Mammary epithelial cell (primary cell): ENCODE measurements at regions of chr6 and their contacts with region 1.

Region 1: GRCh38 chr6:18595774-18596530 is 208.8 kb downstream of the RNF144B start:
- DNase-seq: peak; percentile 36
- H3K4me3 ChIP-seq: no peak overlapping the region
- H3K27ac ChIP-seq: no peak overlapping the region
- H3K4me1 ChIP-seq: no peaks in the 10 kb centered on the region
- H3K27me3 ChIP-seq: no peaks in the 10 kb centered on the region
- CTCF ChIP-seq: peak; percentile 94 to 97

Region 2: DNA sequence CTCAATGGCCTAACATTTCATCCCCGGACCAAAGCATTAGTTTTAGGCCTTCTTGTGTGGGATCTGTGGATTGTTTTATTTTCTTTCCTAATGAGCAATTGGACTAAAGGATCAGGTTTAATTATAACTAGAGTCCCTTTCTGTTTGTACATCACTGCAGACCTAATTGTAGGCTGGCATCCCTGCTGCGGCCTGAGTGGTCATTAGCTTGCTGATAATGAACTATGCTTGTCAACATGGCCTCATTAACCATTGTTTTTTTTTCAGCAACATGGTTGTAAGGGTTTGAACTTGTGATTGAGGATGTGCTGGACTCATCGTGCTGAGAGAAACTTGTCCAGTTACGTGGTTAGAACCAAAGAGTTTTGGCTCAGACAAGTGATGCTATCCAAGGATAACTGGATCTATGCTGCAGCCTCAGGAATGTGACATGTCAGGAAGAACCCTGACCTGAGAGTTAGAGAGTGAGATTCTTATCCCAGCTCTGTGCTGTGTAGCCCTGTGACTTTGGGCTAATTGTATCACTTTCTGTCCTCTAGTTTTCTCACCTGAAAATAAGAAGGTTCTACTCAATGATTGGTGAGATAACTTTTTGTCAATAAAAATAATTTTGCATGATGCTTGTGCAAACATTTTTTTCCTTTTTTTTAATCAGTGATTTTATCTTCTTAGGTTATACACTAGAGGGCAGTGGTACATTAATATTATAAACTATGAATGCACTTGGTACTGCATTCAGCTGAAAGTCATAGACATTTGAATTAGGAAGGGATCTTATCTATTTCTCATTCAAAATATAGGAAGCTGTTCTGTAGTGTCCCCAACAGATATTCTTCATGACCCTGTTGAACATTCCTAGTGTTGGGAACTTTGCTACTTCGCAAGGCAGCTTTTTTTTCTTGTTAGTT is 67.9 kb before region 1 on chr6:
- CTCF ChIA-PET with region 1: no interaction called
- dilution Hi-C with region 1: no loop called
- in situ Hi-C with region 1: no loop called
- intact Hi-C with region 1: loop called (anchors 2 kb)
- DNase-seq: no peak
- H3K4me3 ChIP-seq: no peak overlapping the region
- H3K27ac ChIP-seq: no peak overlapping the region
- H3K4me1 ChIP-seq: no peaks in the 10 kb centered on the region
- H3K27me3 ChIP-seq: peaks cover 2% of the 10 kb centered on the region
- CTCF ChIP-seq: peak; percentile 30 to 46

Region 3: DNA sequence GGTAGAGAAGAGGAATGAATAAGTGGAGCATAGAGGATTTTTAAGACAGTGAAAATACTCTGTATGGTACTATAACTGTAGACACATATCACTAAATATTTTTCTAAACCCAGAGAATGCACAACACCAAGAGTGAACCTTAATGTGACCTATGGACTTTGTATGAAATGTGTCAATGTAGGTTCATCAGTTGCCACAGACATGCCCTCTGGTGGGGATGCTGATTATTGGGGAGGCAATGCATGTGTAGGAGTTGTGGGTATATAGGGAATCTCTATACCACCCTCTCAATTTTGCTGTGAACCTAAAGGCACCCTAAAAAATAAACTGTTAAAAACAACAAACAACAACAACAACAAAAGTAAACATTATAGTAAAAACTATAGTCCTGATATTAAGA is 84.9 kb after region 1 on chr6:
- CTCF ChIA-PET with region 1: no interaction called
- dilution Hi-C with region 1: no loop called
- in situ Hi-C with region 1: no loop called
- intact Hi-C with region 1: loop called (anchors 2 kb)
- DNase-seq: no peak
- H3K4me3 ChIP-seq: no peak overlapping the region
- H3K27ac ChIP-seq: no peak overlapping the region
- H3K4me1 ChIP-seq: no peaks in the 10 kb centered on the region
- H3K27me3 ChIP-seq: no peaks in the 10 kb centered on the region
- CTCF ChIP-seq: peak; percentile 8 to 35

Region 4: DNA sequence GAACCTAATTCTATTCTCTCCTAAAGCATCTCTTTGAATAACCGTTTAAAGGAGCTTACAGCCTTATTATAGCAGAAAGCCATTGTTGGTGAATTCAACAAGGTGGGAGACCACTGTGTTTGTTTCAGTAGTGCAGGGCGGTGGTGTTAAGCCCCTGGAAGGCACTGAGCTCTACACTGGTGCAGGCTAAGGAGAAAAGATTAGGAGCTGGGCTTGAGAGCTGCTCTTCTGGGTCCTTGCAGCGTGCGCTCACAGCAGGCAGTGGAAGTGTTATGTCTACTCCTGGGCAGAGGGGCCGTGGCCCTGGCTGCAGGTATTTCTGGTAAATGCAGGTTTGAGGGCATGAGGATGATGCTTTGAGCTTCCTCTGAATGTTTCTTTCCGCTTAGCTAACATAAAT is 152.4 kb after region 1 on chr6:
- CTCF ChIA-PET with region 1: interaction called, 3 read pairs
- dilution Hi-C with region 1: no loop called
- in situ Hi-C with region 1: no loop called
- intact Hi-C with region 1: loop called (anchors 5 kb)
- DNase-seq: no peak
- H3K4me3 ChIP-seq: no peak overlapping the region
- H3K27ac ChIP-seq: no peak overlapping the region
- H3K4me1 ChIP-seq: no peaks in the 10 kb centered on the region
- H3K27me3 ChIP-seq: peaks cover 4% of the 10 kb centered on the region
- CTCF ChIP-seq: no peak

Region 5: DNA sequence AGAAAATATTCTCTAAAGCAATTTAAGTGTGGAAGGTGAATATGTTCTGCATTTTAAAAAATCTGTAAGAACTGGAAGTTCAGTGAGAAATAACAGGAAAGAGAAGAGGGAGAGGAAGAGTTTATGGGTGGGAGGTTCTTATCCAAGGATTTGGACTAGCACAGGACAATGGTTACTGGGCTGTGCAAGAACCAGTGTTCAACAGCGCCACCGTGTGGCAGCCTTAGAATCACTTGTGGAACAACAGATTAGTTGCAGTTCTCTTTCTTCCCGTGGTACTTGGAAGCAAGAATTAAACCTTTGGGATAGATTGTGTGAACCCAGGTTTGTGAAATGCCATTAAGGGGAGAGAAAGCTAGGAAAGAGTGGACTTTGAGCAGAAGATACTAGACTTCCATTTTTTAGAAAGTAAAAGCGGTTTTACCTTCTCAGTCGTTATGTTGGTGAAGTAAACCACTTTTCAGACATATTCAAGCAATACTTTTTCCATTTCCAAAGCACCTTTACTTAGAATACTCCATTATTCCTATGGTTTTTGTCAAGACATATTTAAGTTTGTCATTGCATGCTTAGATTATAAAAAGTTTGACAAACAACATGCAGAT is 227.9 kb after region 1 on chr6:
- CTCF ChIA-PET with region 1: no interaction called
- dilution Hi-C with region 1: no loop called
- in situ Hi-C with region 1: no loop called
- intact Hi-C with region 1: loop called (anchors 1 kb)
- DNase-seq: peak; percentile 28
- H3K4me3 ChIP-seq: no peak overlapping the region
- H3K27ac ChIP-seq: no peak overlapping the region
- H3K4me1 ChIP-seq: no peaks in the 10 kb centered on the region
- H3K27me3 ChIP-seq: no peaks in the 10 kb centered on the region
- CTCF ChIP-seq: peak; percentile 63 to 67

Region 6: DNA sequence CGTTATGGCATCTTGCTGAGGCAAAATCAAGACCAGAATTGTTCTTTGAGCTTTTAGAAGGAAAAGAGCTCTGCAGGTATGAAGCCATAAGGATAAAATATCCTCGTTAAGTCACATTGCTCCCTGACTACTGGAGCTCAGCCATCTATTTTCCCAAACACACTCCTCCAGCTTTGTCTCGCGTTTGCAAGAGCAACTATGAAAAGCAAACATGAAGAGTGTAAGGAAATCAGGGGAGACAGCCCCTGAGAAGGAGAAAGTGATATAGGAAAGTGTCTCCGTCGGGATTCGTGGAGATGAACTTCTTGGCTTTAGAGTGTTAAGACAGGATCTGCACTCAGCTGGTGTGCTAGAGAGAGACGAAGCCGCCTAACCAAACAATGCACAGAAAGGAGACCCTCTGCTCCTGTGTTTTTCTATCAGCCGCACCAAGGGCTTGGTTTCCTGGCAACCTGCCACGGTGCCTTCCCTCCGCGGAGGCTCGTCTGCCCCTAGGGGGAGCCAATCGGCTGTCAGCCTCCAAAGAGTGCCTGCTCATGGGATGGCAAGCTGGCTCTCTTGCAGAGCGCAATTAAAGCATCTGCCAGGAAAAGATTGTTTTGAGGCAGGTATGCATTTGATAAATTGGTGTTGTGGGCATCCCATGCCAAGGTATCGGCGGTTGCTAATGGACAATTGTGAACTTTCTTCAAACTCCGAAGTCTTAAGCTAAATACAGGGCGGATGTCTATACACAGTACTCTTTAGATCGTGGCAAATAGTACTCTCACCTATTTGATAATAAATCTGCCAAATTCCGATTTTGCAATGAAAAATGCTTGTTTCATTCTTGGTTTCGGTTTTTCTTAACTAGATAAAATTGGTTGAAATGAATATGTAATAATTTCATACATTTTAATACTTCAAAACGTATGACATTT is 394.4 kb after region 1 on chr6:
- CTCF ChIA-PET with region 1: no interaction called
- dilution Hi-C with region 1: no loop called
- in situ Hi-C with region 1: no loop called
- intact Hi-C with region 1: loop called (anchors 10 kb)
- DNase-seq: peak; percentile 16
- H3K4me3 ChIP-seq: no peak overlapping the region
- H3K27ac ChIP-seq: no peak overlapping the region
- H3K4me1 ChIP-seq: no peaks in the 10 kb centered on the region
- H3K27me3 ChIP-seq: no peaks in the 10 kb centered on the region
- CTCF ChIP-seq: peak; percentile 29 to 35